Activated CD4-positive, alpha-beta T cell treated with anti-CD3 and anti-CD28 coated beads, Interleukin-2, amount 10 ng/mL, durations not matched to agents 24 days and 14 days (primary cell): ENCODE measurements at regions of chr3 and their contacts with region 1.

Region 1: DNA sequence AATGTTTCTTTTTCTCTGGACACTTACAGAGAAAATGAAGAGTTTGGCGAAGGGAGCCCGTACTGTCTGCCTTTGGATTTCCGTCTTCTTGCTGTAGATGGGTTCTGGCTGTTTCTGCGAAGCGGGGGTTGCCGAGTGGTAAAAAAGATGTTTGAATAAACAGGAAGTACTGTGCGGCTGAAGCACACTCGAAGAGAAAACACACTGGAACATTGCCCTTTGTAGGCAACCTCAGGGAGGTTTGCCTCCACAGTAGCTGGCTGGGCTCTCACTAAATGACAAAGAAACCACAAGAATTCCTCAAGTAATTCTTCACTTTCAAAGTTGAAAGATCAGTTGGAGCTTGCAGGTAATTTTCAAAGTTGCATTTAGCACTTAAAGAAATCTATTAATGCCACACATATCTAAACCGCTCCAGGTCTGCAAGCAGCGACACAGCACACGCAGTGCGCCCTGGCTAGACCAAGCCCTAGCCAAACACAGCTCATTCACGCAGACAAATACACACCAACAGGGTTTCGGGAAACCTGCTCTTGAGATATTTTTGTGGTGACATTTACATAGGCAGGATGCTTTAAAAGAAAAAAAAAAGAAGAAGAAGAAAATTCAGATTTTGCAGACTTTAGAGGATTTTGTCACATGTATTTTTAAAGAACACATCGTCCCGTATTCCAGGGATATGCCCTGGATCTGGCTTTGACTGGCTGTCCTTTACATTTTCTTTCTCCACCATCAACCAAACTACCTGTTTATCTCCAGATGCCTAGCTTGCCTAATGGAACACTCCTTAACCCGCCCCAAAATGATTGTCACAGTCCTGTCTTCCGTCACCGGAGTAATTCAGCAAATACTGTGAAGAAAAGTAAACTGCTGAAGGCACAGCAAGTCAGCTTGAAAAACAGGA is 452.8 kb downstream of the FOXP1 start:
- DNase-seq: peak; percentile 93
- H3K4me3 Mint-ChIP-seq: peak overlapping the region; percentile 96
- H3K27ac Mint-ChIP-seq: peak overlapping the region; percentile 98
- H3K4me1 Mint-ChIP-seq: peaks cover 55% of the 10 kb centered on the region
- H3K27me3 Mint-ChIP-seq: no peaks in the 10 kb centered on the region

Region 2: DNA sequence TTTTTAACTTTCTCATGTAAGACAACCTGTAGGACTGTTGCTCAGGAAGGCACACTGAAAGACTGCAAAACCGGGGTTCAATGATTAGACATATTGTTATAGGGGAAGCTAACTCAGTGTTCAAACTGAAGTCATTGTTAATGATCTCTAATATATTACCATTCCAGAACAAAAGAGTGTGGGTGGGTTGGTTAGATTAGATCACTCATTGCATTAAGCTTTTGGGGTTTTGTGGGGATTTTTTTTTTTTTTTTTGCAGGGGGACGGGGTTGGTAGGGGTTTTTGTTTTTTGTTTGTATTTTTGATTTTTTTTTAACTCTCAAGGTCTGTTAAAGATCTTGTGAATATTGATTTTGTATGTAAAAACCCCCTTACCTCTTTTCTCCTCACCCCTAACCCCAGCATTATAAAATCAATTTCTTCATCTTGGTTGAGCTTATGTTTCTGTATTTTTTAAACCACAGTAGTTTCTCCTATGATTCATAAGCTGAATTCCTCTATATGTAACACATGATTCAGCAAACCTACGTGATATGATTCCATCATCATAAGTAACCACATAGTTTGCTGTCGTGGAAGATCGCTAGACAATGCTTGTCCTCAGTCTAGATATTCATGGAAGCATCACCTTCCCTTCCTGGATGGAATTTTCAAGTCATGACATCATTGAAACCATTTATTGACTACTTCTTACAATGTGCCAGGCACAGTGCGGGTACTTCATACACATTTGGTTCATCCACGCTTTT is 274.1 kb before region 1 on chr3:
- intact Hi-C with region 1: loop called (anchors 5 kb)
- DNase-seq: no peak
- H3K4me3 Mint-ChIP-seq: no peak overlapping the region
- H3K27ac Mint-ChIP-seq: peak overlapping the region; percentile 54
- H3K4me1 Mint-ChIP-seq: peaks cover 12% of the 10 kb centered on the region
- H3K27me3 Mint-ChIP-seq: peaks cover 19% of the 10 kb centered on the region

Region 3: GRCh38 chr3:71080517-71081083 is 50.1 kb before region 1 on chr3:
- intact Hi-C with region 1: loop called (anchors 1 kb)
- DNase-seq: no peak
- H3K4me3 Mint-ChIP-seq: peak overlapping the region; percentile 46
- H3K27ac Mint-ChIP-seq: peak overlapping the region; percentile 76
- H3K4me1 Mint-ChIP-seq: peaks cover 73% of the 10 kb centered on the region
- H3K27me3 Mint-ChIP-seq: no peaks in the 10 kb centered on the region

Region 4: GRCh38 chr3:71149959-71150954 is 19.5 kb after region 1 on chr3:
- intact Hi-C with region 1: loop called (anchors 1 kb)
- DNase-seq: no peak
- H3K4me3 Mint-ChIP-seq: no peak overlapping the region
- H3K27ac Mint-ChIP-seq: peak overlapping the region; percentile 18
- H3K4me1 Mint-ChIP-seq: peaks cover 10% of the 10 kb centered on the region
- H3K27me3 Mint-ChIP-seq: no peaks in the 10 kb centered on the region

Region 5: DNA sequence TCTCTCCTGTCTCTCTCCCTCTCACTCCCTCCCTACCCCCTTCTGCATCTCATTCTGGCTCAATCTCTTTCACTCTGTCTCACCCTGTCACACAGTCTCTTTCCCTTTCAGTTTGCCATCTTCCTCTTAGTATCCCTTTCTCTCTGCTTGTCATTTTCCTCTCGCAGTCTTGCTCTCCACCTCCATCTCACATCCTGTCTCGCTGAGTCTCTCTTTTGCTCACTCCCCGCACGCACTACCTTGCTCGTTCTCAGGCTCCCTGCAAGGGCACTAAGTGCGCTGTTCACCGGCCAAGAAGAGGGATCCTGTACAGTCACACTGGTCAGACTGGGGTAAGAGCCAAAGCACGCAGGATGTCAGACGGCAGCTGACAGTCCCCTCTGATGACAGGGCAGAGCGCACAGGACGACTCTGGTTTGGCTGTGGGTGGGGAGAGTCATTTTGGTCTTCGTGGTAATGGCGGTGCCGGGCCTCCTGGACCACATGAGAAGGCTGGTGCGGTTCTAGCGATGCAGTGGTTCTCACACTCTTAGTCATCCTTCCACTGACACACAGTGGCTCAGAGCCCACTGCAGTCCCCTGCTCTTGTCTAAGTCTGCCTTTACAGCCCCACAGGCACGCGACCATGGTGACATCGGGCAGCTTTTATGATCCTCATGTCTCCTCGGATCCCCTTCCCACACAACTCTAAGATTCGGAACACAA is 96.0 kb after region 1 on chr3:
- intact Hi-C with region 1: loop called (anchors 1 kb)
- DNase-seq: peak; percentile 94
- H3K4me3 Mint-ChIP-seq: peak overlapping the region; percentile 85
- H3K27ac Mint-ChIP-seq: peak overlapping the region; percentile 95
- H3K4me1 Mint-ChIP-seq: peaks cover 41% of the 10 kb centered on the region
- H3K27me3 Mint-ChIP-seq: peaks cover 35% of the 10 kb centered on the region

Region 6: DNA sequence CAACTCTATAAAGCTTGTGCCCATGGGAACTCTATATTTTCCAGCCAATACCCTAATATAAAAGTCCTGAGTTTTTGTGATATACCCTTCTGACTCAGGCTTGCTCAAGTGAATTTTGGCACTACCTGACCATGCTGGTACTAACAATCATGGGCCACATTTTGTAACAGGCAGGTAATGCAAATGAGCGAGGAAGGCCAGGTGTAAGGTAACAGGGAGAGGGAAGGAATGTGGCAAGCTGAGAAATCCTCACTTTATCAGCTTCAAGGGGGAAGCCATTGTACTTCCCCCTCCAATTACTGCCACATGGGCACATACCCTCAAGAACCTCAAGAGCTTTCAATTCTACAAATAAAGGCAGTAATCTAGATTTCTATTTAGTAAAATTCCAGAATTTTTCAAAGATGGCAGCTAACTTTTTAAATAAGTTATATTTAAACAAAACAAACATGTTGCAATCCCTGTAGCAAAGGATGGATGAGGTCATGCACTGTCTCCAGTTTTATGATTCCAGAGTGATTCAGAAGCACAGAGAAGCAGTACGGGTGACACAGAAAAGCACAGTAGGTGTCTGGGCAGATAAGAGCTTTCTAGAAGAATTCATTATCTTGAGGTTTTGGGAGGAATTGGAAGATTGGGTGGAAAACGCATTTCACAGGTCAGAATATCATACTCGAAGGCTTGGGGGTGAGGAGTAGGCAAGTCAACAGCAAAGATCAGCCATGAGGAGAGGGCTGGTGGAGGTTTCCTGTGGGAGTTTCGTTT is 365.2 kb after region 1 on chr3:
- intact Hi-C with region 1: loop called (anchors 5 kb)
- DNase-seq: peak; percentile 77
- H3K4me3 Mint-ChIP-seq: peak overlapping the region; percentile 71
- H3K27ac Mint-ChIP-seq: peak overlapping the region; percentile 81
- H3K4me1 Mint-ChIP-seq: peaks cover 50% of the 10 kb centered on the region
- H3K27me3 Mint-ChIP-seq: peaks cover 4% of the 10 kb centered on the region